Naive thymus-derived CD4-positive, alpha-beta T cell (primary cell): ENCODE measurements at regions of chr7 and their contacts with region 1.

Region 1: GRCh38 chr7:76008156-76008687 is 13.8 kb upstream of the TMEM120A start:
- DNase-seq: peak in 1 of 9 donors; percentile 38
- ATAC-seq: no peak
- H3K4me3 ChIP-seq: no peak overlapping the region
- H3K4me3 Mint-ChIP-seq: peak overlapping the region in 8 of 10 donors; percentile 1 to 85 (median 65)
- H3K27ac ChIP-seq: no peak overlapping the region
- H3K27ac Mint-ChIP-seq: peak overlapping the region in 6 of 9 donors; percentile 6 to 91 (median 58)
- H3K4me1 ChIP-seq: peaks cover 15 to 25% of the 10 kb centered on the region in 2 donors
- H3K4me1 Mint-ChIP-seq: peaks cover 22 to 37% (median 29%) of the 10 kb centered on the region in 7 donors
- H3K27me3 ChIP-seq: no peaks in the 10 kb centered on the region
- H3K27me3 Mint-ChIP-seq: peaks cover 0 to 2% (median 0%) of the 10 kb centered on the region in 5 donors

Region 2: GRCh38 chr7:76047811-76048667 is 39.8 kb after region 1 on chr7 and contains the starts of genes MDH2 and STYXL1:
- CTCF ChIA-PET with region 1: no interaction called
- POLR2A ChIA-PET with region 1: interaction called, 3 read pairs
- intact Hi-C with region 1: loop called in 1 of 2 experiments (anchors 2 kb)
- DNase-seq: peak; percentile 68 to 89 (median 76)
- ATAC-seq: peak; percentile 92
- H3K4me3 ChIP-seq: peak within 1 kb of the TSS; percentile 95
- H3K4me3 Mint-ChIP-seq: peak within 1 kb of the TSS; percentile 90 to 99 (median 97)
- H3K27ac ChIP-seq: peak within 1 kb of the TSS; percentile 80
- H3K27ac Mint-ChIP-seq: peak within 1 kb of the TSS; percentile 92 to 98 (median 97)
- H3K4me1 ChIP-seq: peaks cover 7 to 17% of the 10 kb centered on the region in 2 donors
- H3K4me1 Mint-ChIP-seq: peaks cover 36 to 70% (median 53%) of the 10 kb centered on the region in 7 donors
- H3K27me3 ChIP-seq: no peaks in the 10 kb centered on the region
- H3K27me3 Mint-ChIP-seq: no peaks in the 10 kb centered on the region
- total RNA-seq, gene MDH2: 71.7 to 172 (median 74.6) TPM
- total RNA-seq, gene STYXL1: 11.3 to 31.7 (median 20.0) TPM

Region 3: GRCh38 chr7:76424721-76425511 is 416.7 kb after region 1 on chr7 and contains the start of gene ZP3:
- CTCF ChIA-PET with region 1: no interaction called
- POLR2A ChIA-PET with region 1: no interaction called
- intact Hi-C with region 1: no loop called
- DNase-seq: no peak
- ATAC-seq: no peak
- H3K4me3 ChIP-seq: no peak within 1 kb of the TSS
- H3K4me3 Mint-ChIP-seq: peak within 1 kb of the TSS in 1 of 10 donors; percentile 76
- H3K27ac ChIP-seq: no peak within 1 kb of the TSS
- H3K27ac Mint-ChIP-seq: peak within 1 kb of the TSS in 1 of 9 donors; percentile 93
- H3K4me1 ChIP-seq: no peaks in the 10 kb centered on the region
- H3K4me1 Mint-ChIP-seq: peaks cover 0 to 28% (median 0%) of the 10 kb centered on the region in 7 donors
- H3K27me3 ChIP-seq: no peaks in the 10 kb centered on the region
- H3K27me3 Mint-ChIP-seq: peaks cover 0 to 25% (median 3%) of the 10 kb centered on the region in 5 donors
- total RNA-seq, gene ZP3: 2.6 to 16.7 (median 5.3) TPM